Endothelial cell of umbilical vein (primary cell): ENCODE measurements at regions of chr4 and their contacts with region 1.

Region 1: GRCh38 chr4:41538017-41538733 is at the start of gene LIMCH1:
- DNase-seq: no peak
- H3K4me3 ChIP-seq: no peak within 1 kb of the TSS
- H3K27ac ChIP-seq: no peak within 1 kb of the TSS
- H3K4me1 ChIP-seq: peaks cover 45% of the 10 kb centered on the region
- H3K27me3 ChIP-seq: peaks cover 4 to 11% of the 10 kb centered on the region in 2 experiments
- CTCF ChIP-seq: no peak
- POLR2A ChIP-seq: no peak
- total RNA-seq, gene LIMCH1: 18.6 and 32.8 TPM in 2 replicates

Region 2: DNA sequence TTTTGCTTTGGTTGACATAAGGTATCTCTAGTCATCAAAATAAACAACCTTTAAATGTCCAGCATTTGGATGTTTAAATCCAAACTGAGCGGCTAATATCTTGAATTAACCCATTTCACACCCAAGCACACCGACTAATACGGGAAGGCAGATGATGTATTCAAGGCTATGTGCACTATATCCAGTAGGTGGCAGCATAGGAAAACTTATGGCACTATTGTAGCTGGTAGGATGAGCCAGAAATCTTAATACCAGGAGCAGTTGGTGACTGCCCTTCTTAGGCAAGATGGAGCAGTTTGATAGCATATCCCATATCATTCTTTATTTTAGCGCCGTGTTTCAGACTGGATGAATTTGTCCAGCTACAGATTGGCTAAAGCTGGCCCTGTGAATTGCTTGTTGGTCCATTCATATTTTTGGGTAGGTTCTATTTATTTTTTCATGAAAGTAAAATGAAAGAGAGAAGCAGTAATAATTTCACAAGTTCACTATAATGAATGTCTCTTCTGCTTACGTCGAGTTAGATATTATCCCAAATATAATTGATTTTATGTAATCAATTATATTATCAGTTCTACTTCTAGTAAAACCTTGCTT is 257.0 kb before region 1 on chr4:
- CTCF ChIA-PET with region 1: no interaction called
- POLR2A ChIA-PET with region 1: no interaction called
- dilution Hi-C with region 1: no loop called
- intact Hi-C with region 1: loop called (anchors 5 kb)
- DNase-seq: peak; percentile 87
- H3K4me3 ChIP-seq: no peak overlapping the region
- H3K27ac ChIP-seq: no peak overlapping the region
- H3K4me1 ChIP-seq: no peaks in the 10 kb centered on the region
- H3K27me3 ChIP-seq: peaks cover 0 to 1% of the 10 kb centered on the region in 2 experiments
- CTCF ChIP-seq: peak; percentile 53 to 77
- POLR2A ChIP-seq: no peak

Region 3: GRCh38 chr4:41360214-41360920 is 177.8 kb before region 1 on chr4:
- CTCF ChIA-PET with region 1: no interaction called
- POLR2A ChIA-PET with region 1: no interaction called
- dilution Hi-C with region 1: no loop called
- intact Hi-C with region 1: loop called (anchors 5 kb)
- DNase-seq: peak; percentile 70
- H3K4me3 ChIP-seq: peak overlapping the region; percentile 28 to 76 (median 40)
- H3K27ac ChIP-seq: no peak overlapping the region
- H3K4me1 ChIP-seq: peaks cover 3% of the 10 kb centered on the region
- H3K27me3 ChIP-seq: peaks cover 7 to 52% of the 10 kb centered on the region in 2 experiments
- CTCF ChIP-seq: no peak
- POLR2A ChIP-seq: no peak

Region 4: DNA sequence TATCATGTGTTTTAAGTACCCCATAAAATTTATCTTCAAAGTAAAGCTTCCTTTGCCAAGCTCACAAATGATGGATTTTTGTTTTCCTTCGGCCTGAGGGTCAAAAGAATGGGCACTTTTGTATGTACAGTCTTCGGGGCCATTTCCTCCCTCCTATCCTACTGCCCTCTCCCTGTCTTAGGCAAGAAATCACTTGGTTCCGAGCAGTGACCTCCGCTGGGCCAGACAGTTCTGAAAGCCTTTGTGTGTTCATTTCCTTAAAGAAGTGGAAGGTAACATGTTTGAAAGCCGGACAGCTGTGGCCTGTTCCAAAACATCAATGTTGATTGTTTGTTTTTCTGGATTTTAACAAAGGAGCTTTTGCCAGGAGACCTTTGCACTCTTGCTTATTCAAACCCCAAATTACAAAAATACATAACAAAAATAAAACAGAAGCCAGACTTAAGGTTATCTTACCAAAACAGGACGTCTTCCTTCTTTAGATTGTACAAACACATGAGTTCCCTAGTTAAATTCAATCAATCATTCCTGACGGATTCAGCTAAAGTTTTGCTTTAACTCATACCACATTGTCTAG is 110.8 kb before region 1 on chr4:
- CTCF ChIA-PET with region 1: no interaction called
- POLR2A ChIA-PET with region 1: no interaction called
- dilution Hi-C with region 1: no loop called
- intact Hi-C with region 1: loop called (anchors 1 kb)
- DNase-seq: peak; percentile 98
- H3K4me3 ChIP-seq: no peak overlapping the region
- H3K27ac ChIP-seq: peak overlapping the region; percentile 40
- H3K4me1 ChIP-seq: peaks cover 37% of the 10 kb centered on the region
- H3K27me3 ChIP-seq: peaks cover 17 to 42% of the 10 kb centered on the region in 2 experiments
- CTCF ChIP-seq: no peak
- POLR2A ChIP-seq: no peak

Region 5: DNA sequence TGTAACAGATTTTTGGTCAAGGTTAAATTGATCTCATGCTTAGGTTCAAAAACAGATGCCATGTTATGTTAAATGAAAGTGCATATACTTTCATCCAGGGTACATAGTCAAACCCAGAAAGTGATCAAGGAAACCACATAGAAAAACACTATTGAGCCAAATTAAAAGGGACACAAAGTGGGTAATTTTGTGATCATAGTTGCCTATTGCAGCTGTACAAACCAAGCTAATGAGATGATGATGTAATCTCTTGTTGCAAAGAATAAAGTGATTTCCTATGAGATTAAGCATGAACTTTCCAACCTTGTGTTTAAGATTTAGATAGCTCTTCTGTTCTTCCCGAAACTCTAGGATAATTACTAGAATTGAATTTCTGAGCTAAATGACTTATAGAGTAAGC is 20.4 kb before region 1 on chr4:
- CTCF ChIA-PET with region 1: no interaction called
- POLR2A ChIA-PET with region 1: no interaction called
- dilution Hi-C with region 1: no loop called
- intact Hi-C with region 1: no loop called
- DNase-seq: no peak
- H3K4me3 ChIP-seq: no peak overlapping the region
- H3K27ac ChIP-seq: no peak overlapping the region
- H3K4me1 ChIP-seq: no peaks in the 10 kb centered on the region
- H3K27me3 ChIP-seq: peaks cover 0 to 9% of the 10 kb centered on the region in 2 experiments
- CTCF ChIP-seq: no peak
- POLR2A ChIP-seq: no peak

Region 6: DNA sequence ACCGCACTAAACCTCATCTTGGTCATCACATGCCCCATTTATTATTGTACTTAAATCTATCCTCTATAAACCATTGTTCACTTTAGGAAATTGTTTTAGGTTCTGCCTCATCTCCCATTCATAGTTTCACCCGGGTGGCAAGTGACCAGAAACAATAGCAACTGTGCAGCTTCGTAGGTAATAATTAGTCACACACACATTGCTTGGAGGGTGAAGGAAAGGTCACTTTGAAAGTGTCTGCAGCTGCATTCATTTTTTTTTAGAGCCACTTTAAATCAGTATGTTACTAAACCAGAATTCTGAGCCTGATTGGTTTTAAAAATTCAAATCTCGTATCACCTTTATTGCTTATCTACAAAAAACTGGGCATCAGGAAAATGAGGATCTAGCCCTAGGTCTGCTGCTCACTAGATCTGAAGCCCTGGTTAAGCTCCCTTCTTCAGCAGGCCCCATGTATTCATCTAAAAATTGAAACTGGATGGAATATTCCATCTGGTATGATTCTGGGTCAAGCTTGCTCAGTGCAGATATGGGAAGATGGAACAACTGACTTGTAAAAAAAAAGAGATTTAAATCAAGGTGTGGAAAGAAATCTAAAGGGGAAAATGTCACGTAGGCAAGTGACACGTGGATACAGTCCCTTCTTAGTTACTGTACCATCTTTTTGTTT is 62.2 kb after region 1 on chr4:
- CTCF ChIA-PET with region 1: no interaction called
- POLR2A ChIA-PET with region 1: no interaction called
- dilution Hi-C with region 1: no loop called
- intact Hi-C with region 1: loop called (anchors 2 kb)
- DNase-seq: peak; percentile 93
- H3K4me3 ChIP-seq: no peak overlapping the region
- H3K27ac ChIP-seq: peak overlapping the region; percentile 40
- H3K4me1 ChIP-seq: peaks cover 16% of the 10 kb centered on the region
- H3K27me3 ChIP-seq: peaks cover 0 to 3% of the 10 kb centered on the region in 2 experiments
- CTCF ChIP-seq: no peak
- POLR2A ChIP-seq: no peak